AG04450 (cell line): ENCODE measurements at regions of chr16 and their contacts with region 1.

Region 1: DNA sequence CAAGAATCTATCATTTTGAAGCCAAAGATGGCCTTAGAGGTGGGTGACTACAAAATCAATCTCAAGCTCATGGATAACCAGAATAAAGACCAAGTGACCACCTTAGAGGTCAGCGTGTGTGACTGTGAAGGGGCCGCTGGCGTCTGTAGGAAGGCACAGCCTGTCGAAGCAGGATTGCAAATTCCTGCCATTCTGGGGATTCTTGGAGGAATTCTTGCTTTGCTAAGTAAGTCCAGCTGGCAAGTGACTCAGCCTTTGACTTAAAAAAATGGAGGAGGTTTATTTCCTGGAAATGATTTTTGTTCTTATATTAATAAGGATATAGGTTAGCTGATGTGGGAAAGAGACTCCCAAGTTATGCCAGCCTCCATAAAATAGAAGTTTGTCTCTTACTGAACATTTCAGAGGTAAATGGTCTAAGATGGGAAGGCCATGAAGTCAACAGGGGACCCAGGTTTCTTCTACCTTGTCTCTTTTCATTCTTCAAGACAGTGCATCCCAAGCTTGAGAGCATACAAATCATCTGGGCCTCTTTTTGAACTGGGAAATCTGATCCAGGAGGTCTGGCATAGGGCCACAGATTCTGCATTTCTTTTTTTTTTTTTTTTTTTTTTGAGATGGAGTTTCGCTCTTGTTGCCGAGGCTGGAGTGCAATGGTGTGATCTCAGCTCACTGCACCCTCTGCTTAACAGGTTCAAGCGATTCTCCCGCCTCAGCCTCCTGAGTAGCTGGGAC is 19.8 kb upstream of the TANGO6 start:
- DNase-seq: peak; percentile 69
- H3K4me3 ChIP-seq: no peak overlapping the region
- H3K27ac ChIP-seq: peak overlapping the region; percentile 87
- H3K27me3 ChIP-seq: no peaks in the 10 kb centered on the region
- CTCF ChIP-seq: no peak

Region 2: GRCh38 chr16:68490829-68491575 is 332.6 kb before region 1 on chr16:
- CTCF ChIA-PET with region 1: no interaction called
- POLR2A ChIA-PET with region 1: no interaction called
- DNase-seq: no peak
- H3K4me3 ChIP-seq: no peak overlapping the region
- H3K27ac ChIP-seq: no peak overlapping the region
- H3K27me3 ChIP-seq: peaks cover 5% of the 10 kb centered on the region
- CTCF ChIP-seq: no peak

Region 3: GRCh38 chr16:68800257-68800875 is 23.2 kb before region 1 on chr16:
- CTCF ChIA-PET with region 1: interaction called, 10 read pairs
- POLR2A ChIA-PET with region 1: interaction called, 5 read pairs
- DNase-seq: peak; percentile 66
- H3K4me3 ChIP-seq: no peak overlapping the region
- H3K27ac ChIP-seq: no peak overlapping the region
- H3K27me3 ChIP-seq: peaks cover 6% of the 10 kb centered on the region
- CTCF ChIP-seq: peak; percentile 89